ENCODE measurements at regions of chr1 and their contacts with region 1.

Region 1: GRCh38 chr1:17335821-17336710 is 28.1 kb downstream of the PADI4 start:
- DNase-seq: peak; percentile 23 to 96
- H3K4me3 ChIP-seq: no peak overlapping the region
- H3K27ac ChIP-seq: no peak overlapping the region
- H3K4me1 ChIP-seq: no peaks in the 10 kb centered on the region
- H3K27me3 ChIP-seq: peaks cover 0 to 3% (median 0%) of the 10 kb centered on the region in 4 experiments; a peak in 3 of 7 replicates
- CTCF ChIP-seq: peak; percentile 78 to 85 (median 80)
- EP300 ChIP-seq: no peak
- POLR2A ChIP-seq: no peak
- RAD21 ChIP-seq: peak; percentile 72 to 82

Region 2: GRCh38 chr1:17307946-17308345 is 28.1 kb before region 1 on chr1 and contains the start of gene PADI4:
- CTCF ChIA-PET with region 1: interaction called, 16 read pairs
- POLR2A ChIA-PET with region 1: no interaction called
- DNase-seq: no peak
- H3K4me3 ChIP-seq: no peak within 1 kb of the TSS; a peak in 1 of 8 replicates
- H3K27ac ChIP-seq: no peak within 1 kb of the TSS
- H3K4me1 ChIP-seq: peaks cover 5 to 16% (median 11%) of the 10 kb centered on the region in 4 experiments
- H3K27me3 ChIP-seq: no peaks in the 10 kb centered on the region
- CTCF ChIP-seq: no peak
- EP300 ChIP-seq: no peak
- POLR2A ChIP-seq: no peak
- RAD21 ChIP-seq: no peak
- total RNA-seq, gene PADI4: not detected in 2 replicates

Region 3: DNA sequence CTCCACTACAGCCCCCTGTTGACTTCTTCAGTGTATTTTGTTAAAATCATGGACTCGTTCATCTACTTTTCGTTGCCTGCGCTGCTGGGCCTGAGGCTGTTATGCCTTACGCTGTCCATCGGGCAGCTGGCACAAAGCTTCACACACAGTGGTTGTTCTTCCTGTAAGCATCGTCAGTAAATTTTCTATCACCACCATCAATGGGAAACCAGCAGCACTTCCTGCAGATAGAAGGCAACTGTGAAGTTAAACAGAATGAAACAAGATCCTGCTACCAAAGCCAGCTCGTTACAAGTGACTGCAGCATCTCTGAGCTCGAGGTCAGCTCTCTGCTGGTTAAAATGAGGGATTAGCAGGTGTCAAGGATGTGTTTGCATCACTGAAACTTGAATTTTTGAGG is 14.0 kb after region 1 on chr1:
- CTCF ChIA-PET with region 1: interaction called, 14 read pairs
- POLR2A ChIA-PET with region 1: interaction called, 5 read pairs
- DNase-seq: no peak
- H3K4me3 ChIP-seq: no peak overlapping the region
- H3K27ac ChIP-seq: no peak overlapping the region
- H3K4me1 ChIP-seq: peaks cover 0 to 5% (median 0%) of the 10 kb centered on the region in 4 experiments; a peak in 1 of 7 replicates
- H3K27me3 ChIP-seq: no peaks in the 10 kb centered on the region
- CTCF ChIP-seq: no peak
- EP300 ChIP-seq: no peak
- POLR2A ChIP-seq: no peak
- RAD21 ChIP-seq: no peak

Region 4: DNA sequence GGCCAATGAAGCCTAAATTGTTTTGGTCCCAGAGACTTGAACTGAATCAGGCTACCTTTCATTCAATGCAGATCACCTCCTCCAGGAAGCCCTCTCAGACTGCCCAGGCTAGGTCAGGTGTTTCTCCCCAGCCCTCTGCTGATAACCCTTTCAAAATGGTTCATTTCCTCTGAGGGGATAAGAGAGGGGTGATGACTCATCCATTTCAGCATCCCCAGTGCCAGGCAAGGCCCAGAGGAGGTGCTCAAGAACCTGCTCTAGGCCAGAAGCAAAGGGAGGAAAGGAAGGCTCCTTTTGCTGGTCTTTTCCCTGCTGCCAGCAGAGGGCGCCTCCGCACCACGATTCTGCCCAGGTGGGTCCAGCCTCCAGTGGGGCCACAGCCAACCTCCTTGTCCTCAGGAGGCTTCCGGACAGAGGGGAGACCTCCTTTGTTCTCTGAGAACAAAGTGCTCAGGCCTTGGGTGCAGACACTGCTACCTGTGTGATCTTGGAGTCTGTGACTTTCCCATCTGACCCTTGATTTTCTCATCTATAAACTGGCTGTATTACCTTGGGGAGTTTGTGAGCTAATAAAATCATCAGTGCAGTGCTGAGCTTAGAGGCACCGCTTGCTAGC is 158.2 kb after region 1 on chr1:
- CTCF ChIA-PET with region 1: no interaction called
- POLR2A ChIA-PET with region 1: no interaction called
- DNase-seq: peak; percentile 89 to 96
- H3K4me3 ChIP-seq: no peak overlapping the region
- H3K27ac ChIP-seq: no peak overlapping the region
- H3K4me1 ChIP-seq: no peaks in the 10 kb centered on the region
- H3K27me3 ChIP-seq: no peaks in the 10 kb centered on the region
- CTCF ChIP-seq: peak; percentile 98 to 100 (median 99)
- EP300 ChIP-seq: 0 out of 3 replicates have a peak, but pooled peaks of 1 of the 2 experiments have one; percentile 40
- POLR2A ChIP-seq: no peak
- RAD21 ChIP-seq: peak; percentile 100

Measured in H1 (cell line).